Activated CD4-positive, alpha-beta T cell treated with anti-CD3 and anti-CD28 coated beads for 36 hours (primary cell): ENCODE measurements at regions of chr6 and their contacts with region 1.

Region 1: GRCh38 chr6:31004285-31004684 is 6.0 kb upstream of the MUC22 start:
- DNase-seq: peak; percentile 20
- ATAC-seq: peak; percentile 96
- H3K4me3 Mint-ChIP-seq: no peak overlapping the region
- H3K27ac Mint-ChIP-seq: no peak overlapping the region
- H3K4me1 Mint-ChIP-seq: peaks cover 9% of the 10 kb centered on the region
- H3K27me3 Mint-ChIP-seq: peaks cover 14% of the 10 kb centered on the region

Region 2: GRCh38 chr6:30955367-30956042 is 48.8 kb before region 1 on chr6:
- CTCF ChIA-PET with region 1: no interaction called
- POLR2A ChIA-PET with region 1: no interaction called
- intact Hi-C with region 1: no loop called
- DNase-seq: peak; percentile 83
- ATAC-seq: peak; percentile 90
- H3K4me3 Mint-ChIP-seq: peak overlapping the region; percentile 67
- H3K27ac Mint-ChIP-seq: peak overlapping the region; percentile 64
- H3K4me1 Mint-ChIP-seq: peaks cover 9% of the 10 kb centered on the region
- H3K27me3 Mint-ChIP-seq: peaks cover 22% of the 10 kb centered on the region

Region 3: DNA sequence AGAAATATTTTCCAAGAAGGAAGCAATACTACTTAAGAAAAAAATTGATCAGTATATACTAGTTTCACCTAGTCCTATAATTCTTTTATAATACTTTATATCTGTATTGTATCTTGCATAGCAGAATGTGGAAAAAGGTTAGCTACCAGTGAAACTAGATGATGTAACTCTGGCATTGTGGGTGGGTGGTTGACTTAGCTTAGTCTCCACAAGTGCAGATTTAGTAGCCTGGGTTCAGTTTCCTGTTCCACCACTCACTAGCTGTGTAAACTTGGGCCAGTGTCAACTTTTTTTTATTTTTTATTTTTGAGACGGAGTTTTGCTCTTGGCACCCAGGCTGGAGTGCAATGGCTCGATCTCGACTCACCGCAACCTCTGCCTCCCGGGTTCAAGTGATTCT is 18.8 kb before region 1 on chr6:
- CTCF ChIA-PET with region 1: interaction called, 4 read pairs
- POLR2A ChIA-PET with region 1: no interaction called
- intact Hi-C with region 1: loop called in 1 of 2 experiments (anchors 2 kb)
- DNase-seq: peak; percentile 40
- ATAC-seq: peak; percentile 87
- H3K4me3 Mint-ChIP-seq: no peak overlapping the region
- H3K27ac Mint-ChIP-seq: no peak overlapping the region
- H3K4me1 Mint-ChIP-seq: peaks cover 12% of the 10 kb centered on the region
- H3K27me3 Mint-ChIP-seq: peaks cover 22% of the 10 kb centered on the region

Region 4: GRCh38 chr6:31068669-31069340 is 64.5 kb after region 1 on chr6:
- CTCF ChIA-PET with region 1: no interaction called
- POLR2A ChIA-PET with region 1: no interaction called
- intact Hi-C with region 1: loop called in 1 of 2 experiments (anchors 5 kb)
- DNase-seq: peak; percentile 82
- ATAC-seq: peak; percentile 99
- H3K4me3 Mint-ChIP-seq: no peak overlapping the region
- H3K27ac Mint-ChIP-seq: no peak overlapping the region
- H3K4me1 Mint-ChIP-seq: peaks cover 2% of the 10 kb centered on the region
- H3K27me3 Mint-ChIP-seq: peaks cover 2% of the 10 kb centered on the region